ENCODE measurements at regions of chr6 and their contacts with region 1.

Region 1: GRCh38 chr6:53825532-53826321 is 30.9 kb downstream of the LRRC1 start:
- DNase-seq: no peak
- H3K4me3 ChIP-seq: no peak overlapping the region
- H3K27ac ChIP-seq: no peak overlapping the region
- H3K4me1 ChIP-seq: peaks cover 46% of the 10 kb centered on the region
- H3K27me3 ChIP-seq: no peaks in the 10 kb centered on the region
- CTCF ChIP-seq: no peak

Region 2: DNA sequence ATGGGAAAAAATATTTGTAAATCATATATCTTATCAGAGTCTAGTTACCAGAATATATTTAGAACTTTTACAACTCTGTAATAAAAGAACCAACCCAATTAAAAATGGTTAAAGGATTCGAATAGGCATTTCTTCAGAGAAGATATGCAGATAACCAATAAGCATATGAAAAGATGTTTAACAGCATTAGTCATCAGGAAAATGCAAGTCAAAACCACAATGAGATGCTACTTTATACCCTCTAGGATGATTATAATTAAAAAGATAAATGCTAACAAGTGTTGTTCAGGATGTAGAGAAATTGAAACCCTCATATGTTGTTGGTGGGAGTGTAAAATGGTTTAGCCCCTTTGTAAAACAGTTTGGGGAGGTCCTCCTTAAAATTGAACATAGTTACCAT is 63.2 kb after region 1 on chr6:
- CTCF ChIA-PET with region 1: no interaction called
- dilution Hi-C with region 1: loop called (anchors 5 kb)
- in situ Hi-C with region 1: no loop called
- intact Hi-C with region 1: no loop called
- DNase-seq: peak; percentile 20
- H3K4me3 ChIP-seq: no peak overlapping the region
- H3K27ac ChIP-seq: no peak overlapping the region
- H3K4me1 ChIP-seq: peaks cover 6% of the 10 kb centered on the region
- H3K27me3 ChIP-seq: no peaks in the 10 kb centered on the region
- CTCF ChIP-seq: no peak

Measured in mammary epithelial cell (primary cell).